CD4-positive, alpha-beta T cell (primary cell): ENCODE measurements at regions of chr17 and their contacts with region 1.

Region 1: DNA sequence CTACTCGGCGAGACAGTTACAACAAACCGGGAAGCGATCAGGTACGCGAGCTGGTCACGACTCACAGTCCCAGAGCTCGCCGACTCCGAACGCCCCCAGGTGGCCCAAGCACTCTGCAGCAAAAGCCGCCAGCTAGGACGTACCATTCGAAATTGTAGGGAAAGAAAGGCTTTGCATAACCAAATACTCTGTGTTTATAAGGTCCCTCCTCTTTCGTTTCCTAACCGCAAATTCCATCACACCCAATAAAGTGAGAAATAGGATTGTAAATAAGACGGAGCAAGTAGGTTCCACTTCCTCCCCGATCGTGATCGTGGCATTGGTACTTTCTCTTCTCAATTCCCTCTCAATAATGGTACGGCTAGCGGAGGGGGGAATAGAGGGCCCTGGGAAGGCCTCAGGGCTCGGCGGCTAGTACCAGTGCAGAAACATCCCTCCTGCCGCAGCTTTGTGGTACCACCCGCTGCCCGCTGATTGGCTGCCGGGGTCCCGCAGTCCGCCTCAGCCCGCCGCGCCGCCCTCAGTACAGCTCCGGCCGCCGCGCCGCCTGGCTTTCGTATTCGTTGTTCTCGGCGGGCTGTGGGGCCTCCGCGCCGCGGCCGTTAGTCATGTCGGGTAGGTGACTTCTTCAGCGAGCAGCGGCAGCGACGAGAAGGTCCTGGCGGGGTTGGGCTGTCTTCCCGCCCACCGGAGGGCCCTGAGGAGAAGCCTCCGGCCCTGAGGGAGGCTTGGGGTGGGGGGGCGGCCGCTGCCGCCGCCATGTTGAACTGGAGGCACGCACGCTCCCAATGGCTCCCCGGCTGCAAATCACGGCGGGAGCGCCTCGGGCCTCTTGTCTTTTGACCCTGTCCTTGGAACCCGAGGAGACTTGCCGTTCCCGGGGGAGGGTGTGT is at the start of gene TAF15:
- DNase-seq: peak; percentile 87 to 98 (median 93)
- ATAC-seq: peak; percentile 89
- H3K4me3 ChIP-seq: peak within 1 kb of the TSS; percentile 94
- H3K4me3 Mint-ChIP-seq: peak within 1 kb of the TSS; percentile 91
- H3K27ac ChIP-seq: peak within 1 kb of the TSS; percentile 81 to 91
- H3K27ac Mint-ChIP-seq: peak within 1 kb of the TSS; percentile 91
- H3K4me1 ChIP-seq: peaks cover 39% of the 10 kb centered on the region
- H3K4me1 Mint-ChIP-seq: peaks cover 63% of the 10 kb centered on the region
- H3K27me3 ChIP-seq: no peaks in the 10 kb centered on the region
- H3K27me3 Mint-ChIP-seq: no peaks in the 10 kb centered on the region
- CTCF ChIP-seq: peak; percentile 89
- total RNA-seq, gene TAF15: 114 to 119 TPM

Region 2: GRCh38 chr17:35161281-35161761 is 647.9 kb before region 1 on chr17:
- CTCF ChIA-PET with region 1: no interaction called
- POLR2A ChIA-PET with region 1: no interaction called
- intact Hi-C with region 1: loop called (anchors 5 to 10 kb)
- DNase-seq: peak in 6 of 14 experiments; percentile 15 to 78 (median 56)
- ATAC-seq: peak; percentile 70
- H3K4me3 ChIP-seq: peak overlapping the region; percentile 30
- H3K4me3 Mint-ChIP-seq: peak overlapping the region; percentile 67
- H3K27ac ChIP-seq: peak overlapping the region; percentile 62 to 68
- H3K27ac Mint-ChIP-seq: peak overlapping the region; percentile 89
- H3K4me1 ChIP-seq: peaks cover 53% of the 10 kb centered on the region
- H3K4me1 Mint-ChIP-seq: peaks cover 66% of the 10 kb centered on the region
- H3K27me3 ChIP-seq: no peaks in the 10 kb centered on the region
- H3K27me3 Mint-ChIP-seq: no peaks in the 10 kb centered on the region
- CTCF ChIP-seq: no peak

Region 3: DNA sequence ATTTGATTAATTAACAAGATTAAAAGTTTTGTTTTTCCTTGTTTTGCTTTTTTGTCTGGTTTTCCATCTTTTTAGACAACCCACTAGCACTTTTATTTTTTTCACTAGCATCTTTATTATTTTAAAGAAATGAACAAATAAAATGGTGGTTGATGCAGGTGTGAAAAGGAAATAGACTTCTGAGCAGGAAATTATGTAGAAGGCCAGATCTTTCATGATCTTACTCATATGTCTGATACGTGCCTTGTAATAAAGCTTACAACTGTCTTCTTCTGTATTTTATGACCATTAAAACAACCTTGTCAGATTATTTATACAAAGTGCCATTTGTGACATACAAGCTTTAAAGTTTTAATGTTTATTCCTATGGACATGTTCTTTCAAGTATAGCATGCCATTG is 278.0 kb before region 1 on chr17:
- CTCF ChIA-PET with region 1: no interaction called
- POLR2A ChIA-PET with region 1: no interaction called
- intact Hi-C with region 1: no loop called
- DNase-seq: peak in 2 of 14 experiments; percentile 37 to 59
- ATAC-seq: peak; percentile 34
- H3K4me3 ChIP-seq: peak overlapping the region; percentile 2
- H3K4me3 Mint-ChIP-seq: peak overlapping the region; percentile 21
- H3K27ac ChIP-seq: peak overlapping the region in 1 of 2 donors; percentile 11
- H3K27ac Mint-ChIP-seq: peak overlapping the region; percentile 80
- H3K4me1 ChIP-seq: peaks cover 37% of the 10 kb centered on the region
- H3K4me1 Mint-ChIP-seq: peaks cover 64% of the 10 kb centered on the region
- H3K27me3 ChIP-seq: no peaks in the 10 kb centered on the region
- H3K27me3 Mint-ChIP-seq: no peaks in the 10 kb centered on the region
- CTCF ChIP-seq: no peak

Region 4: GRCh38 chr17:35587074-35587971 is 221.9 kb before region 1 on chr17 and contains the start of gene AP2B1:
- CTCF ChIA-PET with region 1: no interaction called
- POLR2A ChIA-PET with region 1: interaction called, 9 read pairs
- intact Hi-C with region 1: loop called in 1 of 2 experiments (anchors 2 kb)
- DNase-seq: peak; percentile 89 to 100 (median 96)
- ATAC-seq: peak; percentile 98
- H3K4me3 ChIP-seq: peak within 1 kb of the TSS; percentile 99
- H3K4me3 Mint-ChIP-seq: peak within 1 kb of the TSS; percentile 96
- H3K27ac ChIP-seq: peak within 1 kb of the TSS; percentile 87 to 98
- H3K27ac Mint-ChIP-seq: peak within 1 kb of the TSS; percentile 97
- H3K4me1 ChIP-seq: peaks cover 27% of the 10 kb centered on the region
- H3K4me1 Mint-ChIP-seq: peaks cover 40% of the 10 kb centered on the region
- H3K27me3 ChIP-seq: no peaks in the 10 kb centered on the region
- H3K27me3 Mint-ChIP-seq: no peaks in the 10 kb centered on the region
- CTCF ChIP-seq: no peak
- total RNA-seq, gene AP2B1: 67.0 to 69.2 TPM

Region 5: GRCh38 chr17:35764123-35764991 is 44.9 kb before region 1 on chr17:
- CTCF ChIA-PET with region 1: interaction called, 156 read pairs
- POLR2A ChIA-PET with region 1: interaction called, 142 read pairs
- intact Hi-C with region 1: loop called (anchors 1 kb)
- DNase-seq: peak; percentile 72 to 94 (median 84)
- ATAC-seq: peak; percentile 87
- H3K4me3 ChIP-seq: peak overlapping the region; percentile 79
- H3K4me3 Mint-ChIP-seq: peak overlapping the region; percentile 90
- H3K27ac ChIP-seq: peak overlapping the region; percentile 20 to 23
- H3K27ac Mint-ChIP-seq: peak overlapping the region; percentile 32
- H3K4me1 ChIP-seq: peaks cover 12% of the 10 kb centered on the region
- H3K4me1 Mint-ChIP-seq: peaks cover 7% of the 10 kb centered on the region
- H3K27me3 ChIP-seq: no peaks in the 10 kb centered on the region
- H3K27me3 Mint-ChIP-seq: no peaks in the 10 kb centered on the region
- CTCF ChIP-seq: peak; percentile 82

Region 6: DNA sequence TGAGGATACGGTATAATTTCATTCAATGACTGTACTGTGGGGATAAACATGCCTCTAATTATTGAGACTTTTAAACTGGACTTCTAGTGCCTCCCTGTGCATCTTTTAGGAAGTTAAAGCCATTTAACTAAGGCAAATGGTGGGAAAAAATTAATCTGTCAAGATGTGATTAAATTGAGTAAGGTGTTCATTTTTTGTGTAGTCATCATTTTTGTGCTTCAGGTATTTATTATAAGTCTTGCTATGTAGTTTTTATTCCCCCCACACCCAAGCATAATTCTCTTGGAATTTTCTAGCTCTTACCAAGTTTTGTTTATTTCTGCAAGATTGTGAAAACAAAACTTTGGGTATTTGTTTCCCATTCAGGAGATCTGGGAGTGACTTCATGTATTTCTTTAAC is 10.2 kb after region 1 on chr17:
- CTCF ChIA-PET with region 1: interaction called, 11 read pairs
- POLR2A ChIA-PET with region 1: interaction called, 24 read pairs
- intact Hi-C with region 1: no loop called
- DNase-seq: no peak
- ATAC-seq: no peak
- H3K4me3 ChIP-seq: no peak overlapping the region
- H3K4me3 Mint-ChIP-seq: no peak overlapping the region
- H3K27ac ChIP-seq: no peak overlapping the region
- H3K27ac Mint-ChIP-seq: peak overlapping the region; percentile 52
- H3K4me1 ChIP-seq: peaks cover 13% of the 10 kb centered on the region
- H3K4me1 Mint-ChIP-seq: peaks cover 44% of the 10 kb centered on the region
- H3K27me3 ChIP-seq: no peaks in the 10 kb centered on the region
- H3K27me3 Mint-ChIP-seq: no peaks in the 10 kb centered on the region
- CTCF ChIP-seq: no peak

Region 7: GRCh38 chr17:36486204-36487194 is 677.3 kb after region 1 on chr17 and contains the start of gene ZNHIT3:
- CTCF ChIA-PET with region 1: interaction called, 3 read pairs
- POLR2A ChIA-PET with region 1: no interaction called
- intact Hi-C with region 1: loop called in 1 of 2 experiments (anchors 10 kb)
- DNase-seq: peak; percentile 81 to 96 (median 86)
- ATAC-seq: peak; percentile 95
- H3K4me3 ChIP-seq: peak within 1 kb of the TSS; percentile 99
- H3K4me3 Mint-ChIP-seq: peak within 1 kb of the TSS; percentile 99
- H3K27ac ChIP-seq: peak within 1 kb of the TSS; percentile 41 to 60
- H3K27ac Mint-ChIP-seq: peak within 1 kb of the TSS; percentile 88
- H3K4me1 ChIP-seq: peaks cover 52% of the 10 kb centered on the region
- H3K4me1 Mint-ChIP-seq: peaks cover 44% of the 10 kb centered on the region
- H3K27me3 ChIP-seq: peaks cover 8 to 10% of the 10 kb centered on the region in 2 experiments
- H3K27me3 Mint-ChIP-seq: peaks cover 10% of the 10 kb centered on the region
- CTCF ChIP-seq: no peak
- total RNA-seq, gene ZNHIT3: 70.2 to 73.9 TPM